ENCODE measurements at regions of chr13 and their contacts with region 1.

Region 1: DNA sequence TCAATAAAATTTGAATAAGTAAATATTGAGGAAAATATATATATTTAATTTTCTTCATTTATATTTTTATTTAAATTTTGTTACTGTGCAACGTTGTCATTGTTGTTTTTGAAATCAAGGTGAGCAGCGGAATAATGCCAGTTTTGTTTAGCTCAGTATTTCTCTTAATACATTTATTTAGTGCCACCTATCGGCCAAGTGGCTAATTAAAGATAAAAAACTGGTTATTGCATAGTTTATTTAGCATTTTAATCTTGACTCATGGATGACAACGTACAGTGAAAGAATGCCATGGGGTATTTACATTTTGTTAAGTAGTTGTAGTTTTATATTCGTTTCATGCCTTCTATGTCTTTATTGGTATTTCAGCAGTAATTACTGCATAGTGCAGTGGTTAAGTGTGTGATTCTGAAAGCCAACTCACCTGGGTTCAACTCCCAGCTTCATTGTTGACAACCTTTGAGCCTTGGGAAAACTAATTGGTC is 265.9 kb downstream of the MYO16 start:
- DNase-seq: peak in 1 of 4 experiments; percentile 48
- ATAC-seq: no peak
- H3K4me3 ChIP-seq: no peak overlapping the region
- H3K27ac ChIP-seq: no peak overlapping the region; the same call in 2 of the 3 replicates
- H3K4me1 ChIP-seq: no peaks in the 10 kb centered on the region
- H3K27me3 ChIP-seq: no peaks in the 10 kb centered on the region
- CTCF ChIP-seq: peak; percentile 20 to 47 (median 21); a peak in 3 of 6 replicates
- EP300 ChIP-seq: no peak
- POLR2A ChIP-seq: no peak
- RAD21 ChIP-seq: peak; percentile 35 to 52

Region 2: DNA sequence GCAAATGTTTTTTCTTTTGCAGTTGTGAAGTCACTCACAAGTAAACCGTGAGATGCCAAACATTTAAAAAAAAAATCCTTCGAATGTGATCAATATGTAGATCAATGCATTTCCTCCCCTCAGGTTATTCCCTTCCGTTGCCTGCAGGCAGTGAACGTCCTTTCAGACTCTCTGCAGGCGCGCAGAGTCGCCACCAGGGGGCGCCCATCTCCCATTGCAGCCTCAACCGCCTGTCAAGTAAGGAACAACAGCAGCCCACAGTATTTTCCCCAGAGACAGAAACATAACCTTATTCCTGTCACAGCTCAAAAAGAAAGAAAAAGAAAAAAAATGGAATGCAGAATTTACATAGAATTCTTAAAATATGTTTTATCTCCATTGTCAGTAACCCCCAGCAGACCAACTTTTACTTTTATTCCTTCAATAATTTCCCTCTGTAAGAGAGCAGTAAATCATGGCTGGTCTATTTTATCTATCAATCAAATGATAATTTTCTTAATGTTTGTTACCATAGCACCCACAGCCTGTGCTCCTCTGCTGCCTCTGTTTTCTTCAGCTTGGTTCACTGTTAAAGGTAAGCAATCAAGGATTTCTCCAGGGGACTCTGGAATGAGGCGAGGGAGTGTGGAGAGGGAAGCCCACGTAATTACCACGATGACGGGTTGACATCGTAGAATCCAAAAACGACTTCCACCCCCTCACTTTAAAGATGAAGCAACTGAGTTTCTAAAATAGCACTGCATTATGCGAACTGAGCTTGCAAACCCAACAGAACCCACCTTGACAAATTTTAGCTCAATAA is 1689.8 kb before region 1 on chr13:
- CTCF ChIA-PET with region 1: interaction called, 3 read pairs
- POLR2A ChIA-PET with region 1: no interaction called
- in situ Hi-C with region 1: no loop called
- intact Hi-C with region 1: loop called (anchors 10 kb)
- DNase-seq: peak; percentile 30 to 64 (median 54)
- ATAC-seq: peak; percentile 90
- H3K4me3 ChIP-seq: no peak overlapping the region
- H3K27ac ChIP-seq: no peak overlapping the region
- H3K4me1 ChIP-seq: no peaks in the 10 kb centered on the region
- H3K27me3 ChIP-seq: no peaks in the 10 kb centered on the region
- CTCF ChIP-seq: peak; percentile 67 to 74 (median 67)
- EP300 ChIP-seq: no peak
- POLR2A ChIP-seq: no peak
- RAD21 ChIP-seq: peak in 1 of 2 experiments; percentile 49; a peak in 2 of 4 replicates

Region 3: GRCh38 chr13:108322206-108322824 is 572.9 kb before region 1 on chr13:
- CTCF ChIA-PET with region 1: interaction called, 7 read pairs
- POLR2A ChIA-PET with region 1: no interaction called
- in situ Hi-C with region 1: loop called (anchors 25 kb)
- intact Hi-C with region 1: loop called (anchors 1 kb)
- DNase-seq: peak; percentile 10 to 47 (median 26)
- ATAC-seq: peak; percentile 86
- H3K4me3 ChIP-seq: no peak overlapping the region
- H3K27ac ChIP-seq: no peak overlapping the region
- H3K4me1 ChIP-seq: no peaks in the 10 kb centered on the region
- H3K27me3 ChIP-seq: no peaks in the 10 kb centered on the region
- CTCF ChIP-seq: peak; percentile 31 to 61 (median 38); a peak in 3 of 6 replicates
- EP300 ChIP-seq: no peak
- POLR2A ChIP-seq: no peak
- RAD21 ChIP-seq: peak; percentile 71 to 79

Region 4: DNA sequence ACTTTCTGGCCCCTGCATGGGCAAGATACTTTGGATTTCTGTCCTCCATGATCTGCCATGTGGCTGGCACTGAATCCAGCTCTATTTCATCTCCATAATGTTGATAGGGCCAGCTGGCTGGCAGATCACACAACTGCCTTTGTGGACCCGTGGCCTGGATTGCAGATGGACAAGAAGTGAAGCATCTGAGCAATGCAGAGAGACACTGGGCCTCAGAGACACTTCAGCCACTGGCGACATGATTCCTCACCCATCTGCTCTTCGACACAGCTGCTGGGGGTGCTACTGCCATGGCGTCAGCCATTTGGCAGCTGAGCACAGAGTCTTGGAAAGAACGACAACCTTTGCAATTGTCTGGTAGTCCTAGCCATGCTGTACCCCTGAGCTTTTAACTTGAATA is 345.3 kb before region 1 on chr13:
- CTCF ChIA-PET with region 1: no interaction called
- POLR2A ChIA-PET with region 1: no interaction called
- in situ Hi-C with region 1: no loop called
- intact Hi-C with region 1: no loop called
- DNase-seq: no peak
- ATAC-seq: no peak
- H3K4me3 ChIP-seq: no peak overlapping the region
- H3K27ac ChIP-seq: no peak overlapping the region
- H3K4me1 ChIP-seq: no peaks in the 10 kb centered on the region
- H3K27me3 ChIP-seq: no peaks in the 10 kb centered on the region
- CTCF ChIP-seq: no peak
- EP300 ChIP-seq: no peak
- POLR2A ChIP-seq: no peak
- RAD21 ChIP-seq: no peak

Region 5: DNA sequence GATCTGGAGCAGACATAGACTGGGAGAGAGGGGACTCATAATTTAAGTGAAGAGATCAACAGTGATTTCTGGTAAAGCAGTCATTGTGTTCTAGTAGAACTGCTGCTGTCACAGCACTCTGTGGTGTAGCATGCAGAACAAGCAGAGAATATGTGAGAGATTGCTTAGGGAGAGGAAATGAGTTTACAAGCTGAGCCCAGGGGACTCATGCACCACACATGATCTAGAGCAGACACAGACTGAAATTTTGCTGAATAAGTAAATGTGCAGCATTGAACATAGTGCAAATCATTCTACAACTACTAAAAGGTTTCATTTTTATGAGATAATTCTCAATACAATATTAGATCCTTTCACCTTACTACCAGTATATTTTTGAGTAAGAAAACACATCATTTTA is 140.2 kb before region 1 on chr13:
- CTCF ChIA-PET with region 1: no interaction called
- POLR2A ChIA-PET with region 1: no interaction called
- in situ Hi-C with region 1: no loop called
- intact Hi-C with region 1: no loop called
- DNase-seq: no peak
- ATAC-seq: peak; percentile 45; the same call in 2 of the 3 replicates
- H3K4me3 ChIP-seq: no peak overlapping the region
- H3K27ac ChIP-seq: no peak overlapping the region
- H3K4me1 ChIP-seq: peaks cover 0 to 3% of the 10 kb centered on the region in 2 experiments; a peak in 2 of 5 replicates
- H3K27me3 ChIP-seq: no peaks in the 10 kb centered on the region
- CTCF ChIP-seq: no peak
- EP300 ChIP-seq: no peak
- POLR2A ChIP-seq: no peak
- RAD21 ChIP-seq: no peak

Region 6: DNA sequence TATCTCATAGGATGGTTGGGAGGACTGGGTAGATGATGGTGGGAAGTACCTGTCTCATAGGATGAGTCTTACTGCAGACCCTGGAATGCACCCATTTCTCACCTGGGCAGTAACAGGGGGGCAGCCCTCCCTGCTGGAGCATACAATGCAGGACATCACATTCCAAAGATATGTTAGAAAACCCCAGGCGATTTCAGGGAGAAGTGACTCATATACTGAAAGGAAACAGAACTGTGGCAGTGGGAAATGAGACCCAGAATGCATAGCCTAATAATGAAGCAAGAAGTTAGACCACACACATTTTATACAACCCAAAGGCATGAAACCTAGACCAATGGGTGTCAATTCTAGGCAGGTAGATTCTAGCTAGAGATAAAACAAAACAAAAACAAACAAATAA is 488.4 kb after region 1 on chr13:
- CTCF ChIA-PET with region 1: no interaction called
- POLR2A ChIA-PET with region 1: no interaction called
- in situ Hi-C with region 1: no loop called
- intact Hi-C with region 1: no loop called
- DNase-seq: no peak
- ATAC-seq: no peak
- H3K4me3 ChIP-seq: no peak overlapping the region
- H3K27ac ChIP-seq: no peak overlapping the region
- H3K4me1 ChIP-seq: no peaks in the 10 kb centered on the region
- H3K27me3 ChIP-seq: no peaks in the 10 kb centered on the region
- CTCF ChIP-seq: no peak
- EP300 ChIP-seq: no peak
- POLR2A ChIP-seq: no peak
- RAD21 ChIP-seq: no peak